Activated CD4-positive, alpha-beta T cell treated with anti-CD3 and anti-CD28 coated beads, Interleukin-2, amount 10 ng/mL, durations not matched to agents 7 days and 5 days (primary cell): ENCODE measurements at regions of chr12 and their contacts with region 1.

Region 1: DNA sequence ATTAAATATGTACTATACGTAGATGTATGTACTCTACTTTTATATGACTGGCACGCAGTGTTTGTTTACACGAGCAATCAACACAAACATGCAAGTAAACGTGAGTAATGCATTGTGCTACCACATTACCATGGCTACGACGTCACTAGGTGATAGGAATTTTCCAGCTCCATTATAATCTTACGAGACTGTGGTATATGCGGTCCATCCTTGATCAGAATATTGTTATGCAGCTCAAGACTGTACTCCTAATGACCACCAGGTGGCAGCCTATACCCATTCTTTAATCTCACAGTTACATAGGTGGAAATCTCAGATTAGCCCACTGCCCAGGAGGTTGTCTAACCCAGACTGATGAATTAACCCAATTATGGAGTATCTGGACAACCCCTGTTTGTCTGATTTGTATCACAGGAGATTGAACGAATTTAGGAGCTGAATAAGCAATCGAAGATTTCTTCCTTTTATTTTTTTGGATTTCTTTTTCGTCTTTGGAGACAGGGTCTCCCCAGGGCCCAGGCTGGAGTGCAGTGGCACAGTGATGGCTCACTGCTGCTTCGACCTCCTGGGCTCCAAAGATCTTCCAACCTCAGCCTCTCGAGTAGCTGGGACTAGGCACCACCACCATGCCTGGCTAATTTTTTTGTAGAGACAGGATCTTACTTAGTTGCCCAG is 8.7 kb upstream of the TESPA1 start:
- DNase-seq: peak; percentile 71
- H3K4me3 Mint-ChIP-seq: no peak overlapping the region
- H3K27ac Mint-ChIP-seq: no peak overlapping the region
- H3K4me1 Mint-ChIP-seq: peaks cover 40% of the 10 kb centered on the region
- H3K27me3 Mint-ChIP-seq: no peaks in the 10 kb centered on the region

Region 2: GRCh38 chr12:54588110-54588889 is 405.0 kb before region 1 on chr12 and contains the start of gene PPP1R1A:
- CTCF ChIA-PET with region 1: no interaction called
- POLR2A ChIA-PET with region 1: no interaction called
- DNase-seq: no peak
- H3K4me3 Mint-ChIP-seq: peak within 1 kb of the TSS; percentile 3
- H3K27ac Mint-ChIP-seq: no peak within 1 kb of the TSS
- H3K4me1 Mint-ChIP-seq: peaks cover 7% of the 10 kb centered on the region
- H3K27me3 Mint-ChIP-seq: peaks cover 67% of the 10 kb centered on the region
- total RNA-seq, gene PPP1R1A: not detected

Region 3: GRCh38 chr12:54749191-54749818 is 244.0 kb before region 1 on chr12:
- CTCF ChIA-PET with region 1: interaction called, 14 read pairs
- POLR2A ChIA-PET with region 1: no interaction called
- DNase-seq: peak; percentile 75
- H3K4me3 Mint-ChIP-seq: peak overlapping the region; percentile 44
- H3K27ac Mint-ChIP-seq: no peak overlapping the region
- H3K4me1 Mint-ChIP-seq: peaks cover 22% of the 10 kb centered on the region
- H3K27me3 Mint-ChIP-seq: peaks cover 19% of the 10 kb centered on the region

Region 4: GRCh38 chr12:54759751-54760150 is 233.5 kb before region 1 on chr12:
- CTCF ChIA-PET with region 1: interaction called, 11 read pairs
- POLR2A ChIA-PET with region 1: no interaction called
- DNase-seq: peak; percentile 29
- H3K4me3 Mint-ChIP-seq: no peak overlapping the region
- H3K27ac Mint-ChIP-seq: no peak overlapping the region
- H3K4me1 Mint-ChIP-seq: peaks cover 7% of the 10 kb centered on the region
- H3K27me3 Mint-ChIP-seq: peaks cover 18% of the 10 kb centered on the region

Region 5: GRCh38 chr12:54795644-54796043 is 197.7 kb before region 1 on chr12:
- CTCF ChIA-PET with region 1: no interaction called
- POLR2A ChIA-PET with region 1: no interaction called
- DNase-seq: no peak
- H3K4me3 Mint-ChIP-seq: no peak overlapping the region
- H3K27ac Mint-ChIP-seq: no peak overlapping the region
- H3K4me1 Mint-ChIP-seq: no peaks in the 10 kb centered on the region
- H3K27me3 Mint-ChIP-seq: peaks cover 11% of the 10 kb centered on the region

Region 6: DNA sequence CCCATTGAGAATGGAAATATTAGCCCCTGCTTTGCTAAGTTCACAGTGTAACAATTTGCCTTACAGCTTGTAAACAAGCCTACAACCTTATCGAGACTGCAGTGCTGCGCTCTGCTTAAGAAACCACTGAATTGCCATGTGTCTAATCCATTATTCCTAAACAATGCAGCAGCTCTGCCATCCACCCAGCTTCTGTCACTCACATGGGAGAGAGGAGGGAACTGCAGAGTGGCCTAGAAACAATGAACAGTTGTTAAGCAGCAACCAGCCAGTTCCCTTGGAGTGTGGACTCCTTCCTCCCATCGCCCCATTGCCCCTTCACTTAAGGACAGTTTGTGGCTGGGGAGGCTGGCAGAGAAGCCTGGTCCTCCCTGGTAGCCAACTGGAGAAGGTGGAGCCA is 51.6 kb before region 1 on chr12:
- CTCF ChIA-PET with region 1: no interaction called
- POLR2A ChIA-PET with region 1: no interaction called
- DNase-seq: no peak
- H3K4me3 Mint-ChIP-seq: no peak overlapping the region
- H3K27ac Mint-ChIP-seq: no peak overlapping the region
- H3K4me1 Mint-ChIP-seq: peaks cover 4% of the 10 kb centered on the region
- H3K27me3 Mint-ChIP-seq: no peaks in the 10 kb centered on the region

Region 7: GRCh38 chr12:54977155-54977554 is 16.1 kb before region 1 on chr12:
- CTCF ChIA-PET with region 1: interaction called, 13 read pairs
- POLR2A ChIA-PET with region 1: no interaction called
- DNase-seq: no peak
- H3K4me3 Mint-ChIP-seq: peak overlapping the region; percentile 67
- H3K27ac Mint-ChIP-seq: peak overlapping the region; percentile 87
- H3K4me1 Mint-ChIP-seq: peaks cover 95% of the 10 kb centered on the region
- H3K27me3 Mint-ChIP-seq: no peaks in the 10 kb centered on the region